ENCODE measurements at regions of chr11 and their contacts with region 1.

Region 1: GRCh38 chr11:111283945-111284481 is 14.3 kb upstream of the POU2AF3 start:
- DNase-seq: no peak
- ATAC-seq: peak; percentile 30; the same call in 2 of the 3 replicates
- H3K4me3 ChIP-seq: no peak overlapping the region
- H3K27ac ChIP-seq: no peak overlapping the region
- H3K4me1 ChIP-seq: no peaks in the 10 kb centered on the region
- H3K27me3 ChIP-seq: peaks cover 0 to 3% of the 10 kb centered on the region in 2 experiments; a peak in 2 of 4 replicates
- CTCF ChIP-seq: no peak
- EP300 ChIP-seq: no peak
- POLR2A ChIP-seq: no peak
- RAD21 ChIP-seq: no peak

Region 2: GRCh38 chr11:111347723-111348115 is 63.7 kb after region 1 on chr11:
- CTCF ChIA-PET with region 1: no interaction called
- POLR2A ChIA-PET with region 1: no interaction called
- RAD21 ChIA-PET with region 1: interaction called, 3 read pairs
- SMC1A ChIA-PET with region 1: no interaction called
- in situ Hi-C with region 1: no loop called
- intact Hi-C with region 1: loop called (anchors 5 kb)
- DNase-seq: no peak
- ATAC-seq: no peak
- H3K4me3 ChIP-seq: no peak overlapping the region
- H3K27ac ChIP-seq: no peak overlapping the region
- H3K4me1 ChIP-seq: peaks cover 5% of the 10 kb centered on the region; the same call in 1 of the 2 replicates
- H3K27me3 ChIP-seq: no peaks in the 10 kb centered on the region
- CTCF ChIP-seq: no peak
- EP300 ChIP-seq: no peak
- POLR2A ChIP-seq: 0 out of 2 replicates have a peak, but pooled peaks have one; percentile 25
- RAD21 ChIP-seq: no peak

Region 3: DNA sequence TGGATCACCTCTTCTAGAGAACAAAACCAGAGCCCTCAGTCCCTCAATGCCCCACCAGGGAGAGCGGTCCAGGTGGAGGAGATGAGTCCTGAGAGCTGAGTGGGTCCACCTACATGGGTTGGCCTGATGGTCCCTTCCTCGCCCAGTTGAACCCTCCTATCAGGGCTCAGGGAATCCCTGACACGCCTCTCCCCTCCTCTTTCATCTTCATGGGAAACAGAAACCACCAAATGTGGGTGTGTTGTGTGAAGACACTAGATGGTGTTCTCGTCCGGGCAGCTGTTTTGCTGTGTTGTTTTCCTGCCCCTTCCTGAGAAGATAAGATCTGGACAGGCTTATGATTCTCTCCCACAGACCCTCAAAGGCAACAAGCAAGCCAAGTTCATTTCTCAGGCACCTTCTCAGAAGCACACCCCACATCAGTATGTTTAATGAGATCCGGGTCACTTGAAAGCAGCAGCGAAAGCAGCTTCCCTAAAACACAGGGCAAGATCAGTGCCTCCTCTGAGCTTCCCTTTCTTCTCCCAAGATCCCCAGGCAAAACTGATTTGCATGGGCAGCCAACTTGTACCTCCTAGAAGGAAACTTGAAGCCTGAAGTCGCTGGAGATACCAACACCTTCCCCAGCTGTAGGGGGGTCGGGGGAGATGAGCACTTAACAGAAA is 130.4 kb after region 1 on chr11:
- CTCF ChIA-PET with region 1: interaction called, 680 read pairs
- POLR2A ChIA-PET with region 1: interaction called, 3 read pairs
- RAD21 ChIA-PET with region 1: interaction called, 322 read pairs
- SMC1A ChIA-PET with region 1: interaction called, 455 read pairs
- in situ Hi-C with region 1: no loop called
- intact Hi-C with region 1: no loop called
- DNase-seq: peak; percentile 95
- ATAC-seq: peak; percentile 27
- H3K4me3 ChIP-seq: peak overlapping the region; percentile 37; the same call in 1 of the 2 replicates
- H3K27ac ChIP-seq: peak overlapping the region; percentile 98
- H3K4me1 ChIP-seq: peaks cover 94% of the 10 kb centered on the region
- H3K27me3 ChIP-seq: no peaks in the 10 kb centered on the region
- CTCF ChIP-seq: peak in 1 of 3 experiments; percentile 1; a peak in 1 of 6 replicates
- EP300 ChIP-seq: no peak
- POLR2A ChIP-seq: peak; percentile 71
- RAD21 ChIP-seq: 0 out of 2 replicates have a peak, but pooled peaks have one; percentile 15

Region 4: GRCh38 chr11:111441443-111441842 is 157.4 kb after region 1 on chr11:
- CTCF ChIA-PET with region 1: interaction called, 64 read pairs
- POLR2A ChIA-PET with region 1: no interaction called
- RAD21 ChIA-PET with region 1: interaction called, 45 read pairs
- SMC1A ChIA-PET with region 1: interaction called, 47 read pairs
- in situ Hi-C with region 1: no loop called
- intact Hi-C with region 1: loop called (anchors 1 kb)
- DNase-seq: no peak
- ATAC-seq: peak; percentile 18; the same call in 2 of the 3 replicates
- H3K4me3 ChIP-seq: no peak overlapping the region
- H3K27ac ChIP-seq: no peak overlapping the region
- H3K4me1 ChIP-seq: no peaks in the 10 kb centered on the region; the same call in 1 of the 2 replicates
- H3K27me3 ChIP-seq: no peaks in the 10 kb centered on the region
- CTCF ChIP-seq: no peak
- EP300 ChIP-seq: no peak
- POLR2A ChIP-seq: no peak
- RAD21 ChIP-seq: no peak